ENCODE measurements at regions of chr14 and their contacts with region 1.

Region 1: DNA sequence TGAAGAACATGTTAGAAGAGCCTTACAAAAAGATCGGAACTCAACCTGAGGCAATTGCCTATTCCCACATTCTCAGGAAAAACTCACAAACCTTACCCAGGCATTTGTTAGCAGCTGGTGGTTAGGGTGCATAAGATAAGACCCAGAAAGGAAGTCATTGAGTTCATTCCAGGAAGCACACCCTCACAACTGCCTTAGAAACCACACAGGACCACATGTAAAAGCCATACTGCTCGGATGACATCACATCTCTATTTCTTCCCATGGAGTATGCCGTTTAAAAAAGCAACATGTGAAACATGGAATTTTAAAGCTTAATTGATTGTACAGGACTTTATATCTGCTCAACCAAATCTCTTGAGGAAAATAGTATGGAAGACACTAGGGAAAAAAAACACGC is 411.2 kb downstream of the DAD1 start:
- DNase-seq: no peak
- CTCF ChIP-seq: no peak

Region 2: DNA sequence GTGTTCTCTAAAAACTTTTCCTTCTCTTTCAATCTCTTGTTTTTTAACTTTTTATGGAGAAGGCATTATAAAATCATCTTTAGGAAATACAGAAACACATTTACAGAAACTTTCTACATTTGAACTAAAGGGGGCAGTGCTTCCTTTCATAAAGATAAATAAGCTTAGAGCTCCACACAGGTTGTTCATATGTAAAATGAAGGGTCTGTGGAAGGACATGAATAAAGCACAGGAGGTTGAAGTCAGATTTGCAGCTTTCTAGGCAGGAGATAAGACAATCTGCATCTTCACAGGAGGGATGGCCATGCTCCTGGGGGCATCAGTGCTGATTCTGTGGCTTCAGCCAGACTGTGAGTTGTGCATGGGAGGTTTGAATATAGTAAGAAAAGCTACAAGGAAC is 14.8 kb before region 1 on chr14:
- CTCF ChIA-PET with region 1: interaction called, 54 read pairs
- POLR2A ChIA-PET with region 1: no interaction called
- DNase-seq: no peak
- CTCF ChIP-seq: peak; percentile 29

Region 3: DNA sequence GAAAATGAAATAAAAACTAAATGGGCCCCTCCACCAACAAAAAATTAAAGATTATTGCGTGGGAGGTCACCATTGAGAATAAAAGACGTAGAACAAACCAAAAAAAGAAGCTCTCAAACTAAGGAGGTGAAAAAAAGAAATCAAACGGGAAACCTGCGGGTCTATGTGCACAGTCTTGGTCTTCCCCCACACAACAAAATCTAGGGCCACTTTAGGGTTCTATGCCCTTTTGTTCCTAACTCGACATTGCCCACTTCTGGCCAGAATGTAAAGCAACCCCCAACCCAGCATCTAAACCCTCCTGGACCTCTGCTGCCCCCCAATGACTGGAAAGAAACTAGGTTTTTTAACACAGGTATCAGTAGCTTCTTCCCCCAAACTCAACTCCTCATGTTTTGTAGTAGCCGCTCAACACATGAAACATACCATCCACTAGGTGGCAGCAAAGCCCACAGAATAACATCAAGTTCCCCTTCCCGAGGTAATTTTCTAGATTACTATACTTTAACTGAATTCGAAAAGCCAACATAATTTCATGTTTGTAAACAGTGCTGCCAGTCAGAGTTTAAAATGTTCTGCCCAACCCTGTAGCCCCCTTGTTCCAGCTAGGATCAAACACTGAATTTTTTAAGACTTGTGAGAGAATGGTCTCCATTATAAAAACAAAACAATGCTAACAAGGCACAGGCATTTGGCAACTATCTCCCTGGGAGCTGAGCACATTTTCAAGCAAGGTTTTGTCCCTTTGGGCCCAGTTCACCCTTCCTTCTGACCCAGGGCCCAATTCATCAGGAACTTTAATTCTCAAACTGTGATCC is 392.5 kb after region 1 on chr14:
- CTCF ChIA-PET with region 1: no interaction called
- POLR2A ChIA-PET with region 1: no interaction called
- DNase-seq: peak; percentile 81
- CTCF ChIP-seq: peak; percentile 93